Activated T-helper 1 cell treated with anti-CD3 and anti-CD28 coated beads, Interleukin-12 subunit alpha, Interleukin-12 subunit beta, Interleukin-2, Interleukin-4 antibody, amounts not matched to agents 30 ng/mL and 10 ng/mL and 1 ng/mL, durations not matched to agents 14 hours and 24 hours and 36 hours (primary cell): ENCODE measurements at regions of chr2 and their contacts with region 1.

Region 1: GRCh38 chr2:217090024-217090473 is 230.2 kb upstream of the TNP1 start:
- DNase-seq: no peak
- H3K4me3 Mint-ChIP-seq: peak overlapping the region; percentile 45
- H3K27ac Mint-ChIP-seq: peak overlapping the region; percentile 72
- H3K4me1 Mint-ChIP-seq: peaks cover 50% of the 10 kb centered on the region
- H3K27me3 Mint-ChIP-seq: no peaks in the 10 kb centered on the region

Region 2: GRCh38 chr2:216498418-216499413 is 591.3 kb before region 1 on chr2 and contains the start of gene RPL37A:
- intact Hi-C with region 1: no loop called
- DNase-seq: peak; percentile 87
- H3K4me3 Mint-ChIP-seq: peak within 1 kb of the TSS; percentile 93
- H3K27ac Mint-ChIP-seq: peak within 1 kb of the TSS; percentile 86
- H3K4me1 Mint-ChIP-seq: peaks cover 57% of the 10 kb centered on the region
- H3K27me3 Mint-ChIP-seq: no peaks in the 10 kb centered on the region
- total RNA-seq, gene RPL37A: 2,803 and 2,922 TPM in 2 replicates

Region 3: GRCh38 chr2:216692636-216693413 is 397.2 kb before region 1 on chr2:
- intact Hi-C with region 1: loop called (anchors 5 kb)
- DNase-seq: peak; percentile 60
- H3K4me3 Mint-ChIP-seq: peak overlapping the region; percentile 86
- H3K27ac Mint-ChIP-seq: peak overlapping the region; percentile 81
- H3K4me1 Mint-ChIP-seq: peaks cover 27% of the 10 kb centered on the region
- H3K27me3 Mint-ChIP-seq: peaks cover 71% of the 10 kb centered on the region

Region 4: GRCh38 chr2:217105733-217106649 is 15.9 kb after region 1 on chr2:
- intact Hi-C with region 1: loop called (anchors 2 kb)
- DNase-seq: peak; percentile 3
- H3K4me3 Mint-ChIP-seq: peak overlapping the region; percentile 34
- H3K27ac Mint-ChIP-seq: no peak overlapping the region
- H3K4me1 Mint-ChIP-seq: peaks cover 20% of the 10 kb centered on the region
- H3K27me3 Mint-ChIP-seq: peaks cover 9% of the 10 kb centered on the region

Region 5: GRCh38 chr2:217166241-217166850 is 76.3 kb after region 1 on chr2:
- intact Hi-C with region 1: loop called (anchors 2 kb)
- DNase-seq: no peak
- H3K4me3 Mint-ChIP-seq: no peak overlapping the region
- H3K27ac Mint-ChIP-seq: no peak overlapping the region
- H3K4me1 Mint-ChIP-seq: peaks cover 17% of the 10 kb centered on the region
- H3K27me3 Mint-ChIP-seq: peaks cover 2% of the 10 kb centered on the region